Mammary epithelial cell (primary cell): ENCODE measurements at regions of chr9 and their contacts with region 1.

Region 1: GRCh38 chr9:6055213-6055612 is 39.8 kb upstream of the RANBP6 start:
- DNase-seq: peak; percentile 90
- H3K4me3 ChIP-seq: no peak overlapping the region
- H3K27ac ChIP-seq: no peak overlapping the region
- H3K4me1 ChIP-seq: peaks cover 15% of the 10 kb centered on the region
- H3K27me3 ChIP-seq: no peaks in the 10 kb centered on the region
- CTCF ChIP-seq: peak; percentile 59 to 70

Region 2: DNA sequence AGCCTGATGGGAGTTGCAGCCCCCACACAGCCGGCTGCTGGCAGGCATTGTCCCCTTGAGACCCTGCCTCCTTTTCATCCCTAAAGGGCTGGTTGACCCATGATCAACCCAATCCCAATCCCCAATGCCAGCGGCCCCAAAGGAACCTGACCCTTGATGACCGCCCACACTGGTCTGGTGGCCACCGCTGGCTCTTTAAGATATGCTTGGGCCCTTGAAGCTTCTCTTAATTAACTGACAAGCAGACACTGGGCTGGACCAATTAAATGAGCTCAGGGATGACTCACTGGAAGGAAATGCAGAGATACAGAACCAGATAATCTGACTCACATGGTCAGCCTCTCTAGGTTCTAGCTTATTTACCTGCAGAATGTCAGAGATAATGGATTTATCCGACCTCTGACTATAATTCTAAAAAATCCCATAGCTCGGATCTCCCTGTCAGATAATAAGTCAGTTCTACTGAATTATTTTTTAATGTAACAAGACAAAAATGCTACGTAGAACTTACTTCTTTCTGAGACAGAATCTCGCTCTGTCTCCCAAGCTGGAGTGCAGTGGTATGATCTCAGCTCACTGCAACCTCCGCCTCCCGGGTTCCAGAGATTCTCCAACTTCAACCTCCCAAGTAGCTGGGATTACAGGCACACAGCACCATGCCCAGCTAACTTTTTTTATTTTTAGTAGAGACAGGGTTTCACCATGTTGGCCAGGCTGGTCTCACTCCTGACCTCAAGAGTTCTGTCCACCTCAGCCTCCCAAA is 175.6 kb before region 1 on chr9:
- CTCF ChIA-PET with region 1: interaction called, 10 read pairs
- dilution Hi-C with region 1: no loop called
- in situ Hi-C with region 1: no loop called
- intact Hi-C with region 1: no loop called
- DNase-seq: peak; percentile 89
- H3K4me3 ChIP-seq: peak overlapping the region; percentile 28 to 54 (median 44)
- H3K27ac ChIP-seq: peak overlapping the region; percentile 49
- H3K4me1 ChIP-seq: peaks cover 17% of the 10 kb centered on the region
- H3K27me3 ChIP-seq: no peaks in the 10 kb centered on the region
- CTCF ChIP-seq: no peak

Region 3: DNA sequence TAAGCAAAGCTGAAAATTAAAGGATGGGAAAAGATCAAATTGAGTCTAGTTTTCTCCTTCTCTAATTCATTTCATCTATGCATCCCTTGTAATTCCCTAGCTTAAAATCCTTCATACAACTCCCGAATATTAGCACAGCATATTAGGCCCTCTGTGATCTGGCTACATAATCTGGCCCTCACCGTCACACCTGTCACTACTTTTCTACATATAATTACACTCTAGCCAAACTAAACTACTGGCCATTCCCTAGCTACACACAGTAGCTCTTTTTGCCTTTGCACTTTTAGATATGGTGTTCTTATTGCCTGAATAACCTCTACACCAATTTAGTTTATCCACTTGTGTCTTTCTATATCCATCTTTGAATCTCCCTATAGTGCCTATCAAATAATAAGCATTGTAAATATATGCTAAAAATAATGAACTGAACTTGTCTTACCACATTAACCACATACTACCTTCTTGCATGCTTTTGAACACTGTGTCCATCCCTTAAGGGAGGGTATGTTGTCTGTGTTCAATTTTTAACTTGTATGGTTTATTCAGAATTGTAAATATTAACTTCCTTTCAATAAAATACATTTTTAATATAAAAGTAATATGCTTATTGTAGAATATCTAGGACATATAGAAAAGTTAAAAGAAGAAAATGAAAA is 55.6 kb before region 1 on chr9:
- CTCF ChIA-PET with region 1: no interaction called
- dilution Hi-C with region 1: no loop called
- in situ Hi-C with region 1: no loop called
- intact Hi-C with region 1: no loop called
- DNase-seq: no peak
- H3K4me3 ChIP-seq: no peak overlapping the region
- H3K27ac ChIP-seq: no peak overlapping the region
- H3K4me1 ChIP-seq: peaks cover 7% of the 10 kb centered on the region
- H3K27me3 ChIP-seq: no peaks in the 10 kb centered on the region
- CTCF ChIP-seq: no peak

Region 4: DNA sequence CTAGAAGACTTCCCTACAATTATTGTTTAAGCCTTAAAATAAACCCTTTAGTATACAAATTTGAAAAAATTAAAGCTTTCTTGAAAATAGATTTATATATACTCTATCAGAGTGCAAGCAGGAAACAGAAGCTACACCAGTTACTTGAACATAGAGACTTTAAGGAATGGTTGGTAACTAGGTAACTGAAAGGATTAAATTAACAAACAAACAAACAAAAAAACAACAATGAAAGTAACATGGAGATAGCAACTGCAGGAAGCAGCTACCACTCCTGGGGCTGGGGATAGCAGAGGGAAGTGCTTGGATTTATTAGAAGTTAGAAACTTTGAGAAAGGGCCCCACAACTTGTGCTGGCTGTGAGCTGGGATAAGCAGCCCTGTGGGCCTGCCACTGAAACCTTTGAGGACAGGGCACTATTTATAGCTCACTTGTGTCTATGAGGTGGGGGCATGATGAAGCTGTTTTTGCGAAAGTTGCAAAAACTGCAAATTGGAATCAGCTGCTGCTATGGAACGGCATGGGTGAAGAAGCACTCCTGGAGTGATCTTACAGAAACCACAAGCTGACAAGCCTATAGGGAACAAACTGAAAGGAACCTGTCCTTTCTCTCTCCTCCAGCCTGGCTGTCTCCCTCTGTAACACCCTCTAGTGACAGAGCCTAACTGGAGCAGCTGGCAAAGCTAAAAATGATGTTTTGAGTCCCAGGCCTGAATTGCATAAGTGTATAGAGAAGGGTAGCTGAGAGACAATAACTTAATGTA is 51.5 kb after region 1 on chr9:
- CTCF ChIA-PET with region 1: no interaction called
- dilution Hi-C with region 1: no loop called
- in situ Hi-C with region 1: no loop called
- intact Hi-C with region 1: loop called (anchors 1 kb)
- DNase-seq: peak; percentile 70
- H3K4me3 ChIP-seq: no peak overlapping the region
- H3K27ac ChIP-seq: peak overlapping the region; percentile 67
- H3K4me1 ChIP-seq: peaks cover 45% of the 10 kb centered on the region
- H3K27me3 ChIP-seq: no peaks in the 10 kb centered on the region
- CTCF ChIP-seq: peak; percentile 32 to 71

Region 5: DNA sequence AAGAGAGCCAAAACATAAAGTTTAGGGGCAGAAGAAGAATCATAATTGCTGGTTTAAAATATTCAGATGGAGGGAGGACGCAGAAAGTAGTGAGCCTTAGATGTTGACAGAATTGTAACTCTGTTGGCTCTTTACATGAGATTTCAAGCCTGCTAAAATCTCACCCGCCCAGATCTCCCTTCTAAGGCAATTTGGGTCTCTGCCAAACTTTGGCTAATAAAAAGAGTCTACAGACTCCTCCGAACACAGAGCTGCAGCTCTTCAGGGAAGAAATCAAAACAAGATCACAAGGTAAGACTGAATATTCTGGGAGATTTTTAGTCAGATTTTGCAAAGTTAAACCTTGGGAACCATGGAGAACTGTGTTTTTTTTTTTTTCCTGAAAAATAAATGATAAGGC is 160.3 kb after region 1 on chr9 and contains the start of gene IL33:
- CTCF ChIA-PET with region 1: no interaction called
- dilution Hi-C with region 1: no loop called
- in situ Hi-C with region 1: loop called in 1 of 2 experiments (anchors 25 kb)
- intact Hi-C with region 1: no loop called
- DNase-seq: no peak
- H3K4me3 ChIP-seq: no peak within 1 kb of the TSS
- H3K27ac ChIP-seq: no peak within 1 kb of the TSS
- H3K4me1 ChIP-seq: no peaks in the 10 kb centered on the region
- H3K27me3 ChIP-seq: no peaks in the 10 kb centered on the region
- CTCF ChIP-seq: no peak
- total RNA-seq, gene IL33: 0.50 to 0.94 TPM

Region 6: GRCh38 chr9:6566409-6567139 is 511.4 kb after region 1 on chr9:
- CTCF ChIA-PET with region 1: interaction called, 6 read pairs
- dilution Hi-C with region 1: no loop called
- in situ Hi-C with region 1: no loop called
- intact Hi-C with region 1: loop called (anchors 1 kb)
- DNase-seq: peak; percentile 99
- H3K4me3 ChIP-seq: peak overlapping the region; percentile 42 to 45 (median 44)
- H3K27ac ChIP-seq: peak overlapping the region; percentile 100
- H3K4me1 ChIP-seq: peaks cover 39% of the 10 kb centered on the region
- H3K27me3 ChIP-seq: no peaks in the 10 kb centered on the region
- CTCF ChIP-seq: peak in 1 of 2 donors; percentile 20